ENCODE measurements at regions of chr18 and their contacts with region 1.

Region 1: DNA sequence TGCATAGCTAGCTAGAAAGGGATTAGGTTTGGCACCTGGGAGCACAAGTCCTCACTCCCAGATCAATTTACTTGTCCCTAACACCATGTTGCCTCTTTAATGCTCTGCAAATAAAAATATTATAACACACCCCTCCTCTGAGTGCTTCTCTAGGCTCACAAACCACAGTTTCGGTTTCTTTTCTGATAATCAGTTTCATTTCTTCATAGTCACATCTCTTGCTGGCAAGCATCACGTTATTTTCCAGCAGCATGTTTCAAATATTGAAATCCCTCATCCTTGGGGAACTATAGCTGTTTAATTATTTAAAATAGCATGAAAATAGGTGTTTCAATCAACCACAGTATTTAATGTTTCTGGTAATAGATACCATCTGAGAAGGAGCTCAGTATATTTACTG is 13.9 kb upstream of the SMCHD1 start:
- DNase-seq: peak; percentile 75
- H3K4me3 Mint-ChIP-seq: peak overlapping the region; percentile 70
- H3K27ac Mint-ChIP-seq: peak overlapping the region; percentile 87
- H3K4me1 Mint-ChIP-seq: peaks cover 43% of the 10 kb centered on the region
- H3K27me3 Mint-ChIP-seq: no peaks in the 10 kb centered on the region

Region 2: GRCh38 chr18:2589345-2590068 is 52.1 kb before region 1 on chr18:
- intact Hi-C with region 1: loop called (anchors 5 kb)
- DNase-seq: no peak
- H3K4me3 Mint-ChIP-seq: peak overlapping the region; percentile 65
- H3K27ac Mint-ChIP-seq: peak overlapping the region; percentile 94
- H3K4me1 Mint-ChIP-seq: peaks cover 42% of the 10 kb centered on the region
- H3K27me3 Mint-ChIP-seq: no peaks in the 10 kb centered on the region

Region 3: GRCh38 chr18:2606335-2606734 is 35.3 kb before region 1 on chr18:
- intact Hi-C with region 1: loop called (anchors 1 kb)
- DNase-seq: no peak
- H3K4me3 Mint-ChIP-seq: peak overlapping the region; percentile 70
- H3K27ac Mint-ChIP-seq: peak overlapping the region; percentile 88
- H3K4me1 Mint-ChIP-seq: peaks cover 44% of the 10 kb centered on the region
- H3K27me3 Mint-ChIP-seq: no peaks in the 10 kb centered on the region

Region 4: DNA sequence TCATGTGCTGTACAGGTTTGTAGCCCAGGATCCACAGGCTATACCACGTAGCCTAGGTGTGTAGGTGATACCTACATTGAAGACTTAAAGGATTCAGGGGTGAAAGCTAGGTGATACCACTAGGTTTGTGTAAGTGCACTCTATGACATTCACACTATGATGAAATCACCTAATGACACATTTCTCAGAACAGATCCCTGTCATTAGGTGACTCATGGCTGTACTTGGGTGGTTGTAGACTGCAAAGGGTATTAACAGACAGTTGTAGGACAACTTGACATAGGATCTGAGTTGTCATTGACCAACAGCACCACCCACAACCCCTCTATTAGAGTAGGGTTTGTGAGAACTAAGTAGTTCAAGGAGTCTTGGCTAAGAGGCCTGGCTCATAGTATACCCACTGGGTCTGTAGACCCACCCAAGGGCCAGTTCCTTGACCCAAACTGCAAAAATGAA is 13.8 kb before region 1 on chr18:
- intact Hi-C with region 1: loop called (anchors 1 kb)
- DNase-seq: peak; percentile 67
- H3K4me3 Mint-ChIP-seq: no peak overlapping the region
- H3K27ac Mint-ChIP-seq: peak overlapping the region; percentile 66
- H3K4me1 Mint-ChIP-seq: peaks cover 15% of the 10 kb centered on the region
- H3K27me3 Mint-ChIP-seq: no peaks in the 10 kb centered on the region

Region 5: DNA sequence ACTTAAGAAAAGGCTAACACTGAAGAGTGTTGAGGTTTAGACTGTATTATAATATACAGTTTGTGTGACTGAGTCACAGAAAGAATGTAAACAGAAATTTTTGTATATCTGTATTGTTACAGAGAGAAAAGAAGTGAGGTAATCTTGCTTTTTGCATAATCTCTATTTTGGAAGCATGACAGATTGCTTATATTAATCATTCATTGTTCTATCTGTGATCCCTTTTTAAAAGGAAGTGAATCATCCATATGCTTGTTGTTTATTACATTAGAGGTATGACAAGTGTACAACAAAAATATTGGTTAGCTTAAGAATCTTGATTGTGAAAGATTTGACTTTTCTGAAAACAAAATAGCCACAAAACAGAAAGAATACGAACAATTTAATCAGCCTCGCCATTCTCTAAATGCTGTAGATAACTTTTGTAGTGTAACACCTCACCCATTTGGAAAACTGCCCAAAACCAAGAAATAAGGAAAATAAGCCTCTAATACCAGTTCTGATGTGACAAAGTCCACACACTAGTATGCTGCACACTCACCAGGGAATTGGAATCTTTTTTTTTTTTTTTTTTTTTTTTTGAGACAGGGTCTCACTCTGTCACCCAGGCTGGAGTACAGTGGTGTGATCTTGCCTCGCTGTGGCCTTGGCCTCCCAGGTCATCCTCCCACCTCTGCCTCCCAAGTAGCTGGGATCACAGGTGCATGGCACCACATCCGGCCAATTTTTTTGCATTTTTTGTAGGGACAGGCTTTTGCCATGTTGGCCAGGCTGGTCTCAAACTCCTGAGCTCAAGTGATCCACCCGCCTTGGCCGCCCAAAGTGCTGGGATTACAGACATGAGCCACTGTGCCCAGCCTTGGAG is 462.8 kb after region 1 on chr18:
- intact Hi-C with region 1: no loop called
- DNase-seq: no peak
- H3K4me3 Mint-ChIP-seq: no peak overlapping the region
- H3K27ac Mint-ChIP-seq: no peak overlapping the region
- H3K4me1 Mint-ChIP-seq: no peaks in the 10 kb centered on the region
- H3K27me3 Mint-ChIP-seq: peaks cover 2% of the 10 kb centered on the region

Measured in activated CD4-positive, alpha-beta T cell treated with anti-CD3 and anti-CD28 coated beads, Interleukin-2, amount 10 ng/mL, durations not matched to agents 24 days and 14 days (primary cell).